Sigmoid colon (tissue), 7 donors: ENCODE measurements at regions of chr6 and their contacts with region 1.

Region 1: DNA sequence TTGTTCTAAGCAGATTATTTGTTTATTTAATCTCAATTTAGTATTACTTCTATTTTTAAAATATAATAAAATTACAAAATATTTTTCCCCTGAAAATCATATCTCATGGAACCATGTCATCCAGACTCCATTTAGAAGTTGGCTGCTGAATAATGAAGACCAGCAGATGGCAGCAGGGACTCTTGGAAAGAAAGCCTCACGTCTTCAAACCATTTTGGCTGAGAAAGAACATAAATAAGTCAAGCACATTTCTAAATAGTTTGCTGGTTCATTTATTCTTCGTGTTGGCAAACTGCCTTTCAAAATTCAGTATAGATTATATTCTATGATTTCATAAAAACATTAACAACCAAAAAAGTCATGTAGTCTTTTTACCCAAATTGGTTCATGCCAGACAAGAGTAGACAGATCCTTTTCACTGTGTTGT is 71.7 kb downstream of the RCAN2 start:
- DNase-seq: peak; percentile 66
- H3K4me3 ChIP-seq: no peak overlapping the region
- H3K27ac ChIP-seq: no peak overlapping the region
- H3K4me1 ChIP-seq: no peaks in the 10 kb centered on the region
- H3K27me3 ChIP-seq: no peaks in the 10 kb centered on the region
- CTCF ChIP-seq: peak; percentile 13 to 81 (median 65)
- EP300 ChIP-seq: no peak
- POLR2A ChIP-seq: no peak

Region 2: GRCh38 chr6:46491628-46492547 is 72.3 kb after region 1 on chr6:
- intact Hi-C with region 1: loop called (anchors 5 kb)
- DNase-seq: no peak
- H3K4me3 ChIP-seq: peak overlapping the region; percentile 46 to 77 (median 63)
- H3K27ac ChIP-seq: peak overlapping the region; percentile 57 to 81 (median 60)
- H3K4me1 ChIP-seq: peaks cover 0 to 24% (median 14%) of the 10 kb centered on the region in 4 donors
- H3K27me3 ChIP-seq: peaks cover 0 to 13% (median 7%) of the 10 kb centered on the region in 3 donors
- CTCF ChIP-seq: peak in 3 of 4 experiments; percentile 17 to 55 (median 44)
- EP300 ChIP-seq: no peak
- POLR2A ChIP-seq: no peak

Region 3: DNA sequence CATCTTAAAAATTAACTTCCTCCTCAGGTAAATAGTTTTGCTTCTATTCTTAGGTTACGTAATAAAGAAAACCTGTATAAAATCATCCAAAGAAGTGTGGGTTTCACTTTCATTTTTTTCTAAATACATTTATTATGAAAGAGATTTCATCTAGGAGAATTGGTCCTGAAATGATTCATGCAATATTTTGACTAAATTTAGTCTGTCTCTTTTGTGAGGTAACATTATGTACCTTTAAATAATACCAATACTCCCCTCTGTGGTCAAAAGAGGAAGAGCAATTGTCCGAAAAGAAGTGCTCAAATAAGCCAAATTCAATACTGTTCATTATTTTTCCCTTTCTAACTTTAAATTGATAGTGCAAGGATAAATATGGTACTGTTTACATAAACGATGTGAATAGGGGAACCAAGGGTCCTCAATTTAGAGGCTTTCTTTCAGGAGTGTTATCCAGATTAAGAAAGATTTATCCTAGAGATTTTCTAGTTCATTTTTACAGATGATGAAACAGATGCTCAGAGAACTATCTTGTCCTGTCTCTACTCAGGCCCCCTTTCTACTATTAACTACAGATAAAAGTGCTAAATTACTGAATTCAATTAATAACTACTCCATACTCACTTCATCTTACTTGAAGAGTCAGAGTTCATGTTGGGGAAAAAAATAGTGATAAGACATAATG is 206.8 kb after region 1 on chr6:
- intact Hi-C with region 1: loop called (anchors 2 kb)
- DNase-seq: no peak
- H3K4me3 ChIP-seq: no peak overlapping the region
- H3K27ac ChIP-seq: no peak overlapping the region
- H3K4me1 ChIP-seq: no peaks in the 10 kb centered on the region
- H3K27me3 ChIP-seq: no peaks in the 10 kb centered on the region
- CTCF ChIP-seq: peak in 3 of 4 experiments; percentile 48 to 60 (median 55)
- EP300 ChIP-seq: no peak
- POLR2A ChIP-seq: no peak

Region 4: DNA sequence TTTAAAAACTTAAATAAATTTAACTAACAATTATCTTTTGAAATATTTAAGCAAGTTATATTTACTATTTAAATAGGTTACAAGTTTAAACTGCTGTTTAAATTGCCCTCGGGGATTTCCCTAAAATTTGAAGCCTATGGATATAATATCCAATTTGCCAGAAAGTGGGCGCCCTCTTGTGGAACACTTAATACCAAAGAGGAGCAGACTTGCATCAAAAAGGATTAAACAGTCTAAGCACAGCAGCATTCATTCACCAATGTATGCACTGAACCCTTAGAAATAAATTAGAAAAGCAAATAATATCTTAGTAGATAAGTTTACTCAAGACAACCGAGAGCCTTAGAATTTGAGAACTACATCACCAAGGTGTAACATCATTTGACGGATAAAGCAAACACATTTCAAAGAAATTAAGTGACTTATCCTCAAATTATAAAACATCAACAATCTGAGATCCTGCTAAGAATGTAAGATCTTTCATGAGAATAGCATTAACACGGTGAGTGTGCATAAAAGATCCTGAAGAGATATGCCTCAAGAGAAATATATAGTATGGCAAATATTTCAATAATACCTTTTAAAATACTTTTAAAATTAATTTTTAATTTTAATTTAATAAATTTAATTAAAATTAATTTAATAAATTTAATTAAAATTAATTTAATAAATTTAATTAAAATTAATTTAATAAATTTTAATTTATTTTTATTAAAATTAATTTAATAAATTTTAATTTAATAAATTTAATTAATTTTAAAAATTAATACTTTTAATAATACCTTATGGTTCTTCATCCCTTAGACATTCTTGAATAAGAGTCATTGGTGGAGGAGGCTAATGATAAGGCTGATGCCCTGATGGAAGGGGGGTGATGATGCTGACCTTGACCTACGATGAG is 362.1 kb after region 1 on chr6:
- intact Hi-C with region 1: loop called (anchors 10 kb)
- DNase-seq: no peak
- H3K4me3 ChIP-seq: no peak overlapping the region
- H3K27ac ChIP-seq: no peak overlapping the region
- H3K4me1 ChIP-seq: no peaks in the 10 kb centered on the region
- H3K27me3 ChIP-seq: no peaks in the 10 kb centered on the region
- CTCF ChIP-seq: peak in 3 of 4 experiments; percentile 34 to 45 (median 45)
- EP300 ChIP-seq: no peak
- POLR2A ChIP-seq: no peak